Heart left ventricle (tissue), 16 donors: ENCODE measurements at regions of chr5 and their contacts with region 1.

Region 1: DNA sequence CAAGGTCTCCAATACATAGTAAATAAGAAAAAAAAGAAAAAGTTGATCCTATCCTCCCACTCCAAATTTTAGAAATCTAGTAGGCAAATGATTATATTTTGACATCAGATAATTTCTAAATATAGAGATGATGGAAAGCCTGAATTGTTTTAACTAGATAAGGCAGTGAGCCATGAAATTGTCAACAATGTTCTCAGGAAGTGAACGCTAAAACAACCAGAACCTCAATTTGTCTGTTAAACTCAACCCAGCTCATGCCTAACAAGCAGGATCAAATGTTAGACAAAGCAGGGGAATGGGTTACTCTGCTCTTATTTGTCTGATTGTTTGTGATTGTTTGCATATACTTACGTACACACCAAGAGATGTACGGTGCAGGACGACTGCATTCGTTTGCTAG is 49.2 kb downstream of the ESM1 start:
- DNase-seq: no peak
- ATAC-seq: no peak
- H3K4me3 ChIP-seq: no peak overlapping the region
- H3K27ac ChIP-seq: no peak overlapping the region
- H3K4me1 ChIP-seq: no peaks in the 10 kb centered on the region
- H3K27me3 ChIP-seq: peaks cover 0 to 18% (median 4%) of the 10 kb centered on the region in 9 donors
- CTCF ChIP-seq: no peak
- POLR2A ChIP-seq: no peak

Region 2: GRCh38 chr5:54990841-54991258 is 54.6 kb after region 1 on chr5:
- intact Hi-C with region 1: loop called in 1 of 10 experiments (anchors 10 kb)
- DNase-seq: no peak
- ATAC-seq: no peak
- H3K4me3 ChIP-seq: no peak overlapping the region
- H3K27ac ChIP-seq: no peak overlapping the region
- H3K4me1 ChIP-seq: no peaks in the 10 kb centered on the region
- H3K27me3 ChIP-seq: peaks cover 0 to 26% (median 0%) of the 10 kb centered on the region in 9 donors
- CTCF ChIP-seq: no peak
- POLR2A ChIP-seq: no peak